ENCODE measurements at regions of chr12 and their contacts with region 1.

Region 1: GRCh38 chr12:31651893-31652521 is 7.5 kb upstream of the ETFBKMT start:
- DNase-seq: no peak
- H3K4me3 Mint-ChIP-seq: peak overlapping the region; percentile 38
- H3K27ac Mint-ChIP-seq: peak overlapping the region; percentile 17
- H3K4me1 Mint-ChIP-seq: peaks cover 30% of the 10 kb centered on the region
- H3K27me3 Mint-ChIP-seq: no peaks in the 10 kb centered on the region
- CTCF ChIP-seq: no peak

Region 2: DNA sequence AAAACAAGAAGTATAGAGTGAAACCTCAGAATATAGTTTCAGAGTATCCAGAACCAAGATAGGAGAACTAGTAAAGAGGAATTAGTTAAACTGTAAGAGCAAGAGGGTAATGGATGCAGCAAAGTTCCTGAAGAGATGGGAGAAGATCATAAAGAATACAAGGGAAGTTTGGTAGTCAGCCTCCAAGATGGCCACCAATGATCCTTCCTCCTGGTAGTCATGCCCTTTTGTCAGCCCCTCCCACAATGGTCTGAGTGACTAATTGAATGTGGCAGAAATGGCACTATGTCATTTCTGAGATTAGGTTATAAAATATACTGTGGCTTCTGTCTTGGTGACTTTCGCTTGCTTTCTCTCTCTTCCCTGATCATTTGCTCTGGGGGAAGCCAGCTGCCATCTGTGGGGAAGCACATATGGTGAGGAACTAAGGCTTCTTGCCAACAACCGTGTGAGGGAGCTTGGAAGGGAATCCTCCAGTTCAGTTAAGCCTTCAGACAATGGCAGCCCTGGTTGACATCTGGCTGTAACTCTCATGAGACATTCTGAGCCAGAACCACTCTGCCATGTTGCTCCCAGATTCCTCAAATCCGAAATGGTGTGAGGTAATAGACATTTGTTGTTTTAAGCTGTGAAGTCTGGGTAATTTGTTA is 132.1 kb after region 1 on chr12:
- CTCF ChIA-PET with region 1: no interaction called
- intact Hi-C with region 1: no loop called
- DNase-seq: no peak
- H3K4me3 Mint-ChIP-seq: no peak overlapping the region
- H3K27ac Mint-ChIP-seq: no peak overlapping the region
- H3K4me1 Mint-ChIP-seq: no peaks in the 10 kb centered on the region
- H3K27me3 Mint-ChIP-seq: no peaks in the 10 kb centered on the region
- CTCF ChIP-seq: no peak

Region 3: GRCh38 chr12:32312049-32312670 is 660.2 kb after region 1 on chr12:
- CTCF ChIA-PET with region 1: interaction called, 34 read pairs
- intact Hi-C with region 1: loop called (anchors 1 kb)
- DNase-seq: peak; percentile 16
- H3K4me3 Mint-ChIP-seq: no peak overlapping the region
- H3K27ac Mint-ChIP-seq: no peak overlapping the region
- H3K4me1 Mint-ChIP-seq: peaks cover 11% of the 10 kb centered on the region
- H3K27me3 Mint-ChIP-seq: no peaks in the 10 kb centered on the region
- CTCF ChIP-seq: peak; percentile 52

Measured in Calu3 (cell line).